ENCODE measurements at regions of chr9 and their contacts with region 1.

Region 1: DNA sequence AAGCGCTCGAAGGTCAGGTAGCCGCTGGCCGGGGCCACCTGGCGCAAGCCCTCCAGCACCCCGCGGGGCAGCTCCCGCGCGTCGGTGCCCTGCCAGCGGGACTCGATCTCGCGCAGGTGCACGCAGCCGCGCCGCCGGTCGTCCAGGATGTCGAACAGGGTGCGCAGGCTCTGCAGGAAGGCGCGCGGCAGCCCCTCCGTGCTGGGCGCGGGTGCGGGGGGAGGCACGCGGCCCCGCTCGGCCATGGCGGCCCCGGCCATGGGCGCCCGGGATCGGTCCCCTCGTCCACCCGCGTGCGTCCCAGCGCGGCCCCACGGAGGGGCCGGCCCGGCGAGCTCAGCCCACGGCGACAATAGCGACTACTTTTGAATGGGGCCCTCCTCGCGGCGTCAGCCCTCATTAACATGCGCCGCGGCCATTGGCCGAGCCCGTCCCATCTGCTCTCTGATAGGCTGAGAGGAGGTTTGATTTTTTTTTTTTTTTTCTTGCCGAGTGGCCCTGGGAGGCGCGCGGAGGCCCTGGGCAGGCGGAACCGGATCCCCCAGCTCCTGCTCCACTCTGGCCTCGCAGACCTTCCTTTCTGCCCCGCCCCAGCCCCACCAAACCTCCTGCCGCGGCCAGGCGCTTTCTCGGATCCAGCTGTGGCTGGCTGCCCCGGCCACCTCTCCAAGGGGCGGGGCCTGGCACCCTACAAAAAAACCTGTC is at the start of gene SAPCD2:
- DNase-seq: peak; percentile 80
- ATAC-seq: peak; percentile 83
- H3K4me3 Mint-ChIP-seq: peak within 1 kb of the TSS; percentile 72
- H3K27ac Mint-ChIP-seq: peak within 1 kb of the TSS; percentile 41
- H3K4me1 Mint-ChIP-seq: peaks cover 24% of the 10 kb centered on the region
- H3K27me3 Mint-ChIP-seq: peaks cover 4% of the 10 kb centered on the region
- CTCF ChIP-seq: no peak
- total RNA-seq, gene SAPCD2: 0.80 and 0.81 TPM in 2 replicates

Region 2: GRCh38 chr9:136363606-136364370 is 706.6 kb before region 1 on chr9 and contains the start of gene DNLZ:
- CTCF ChIA-PET with region 1: no interaction called
- POLR2A ChIA-PET with region 1: no interaction called
- intact Hi-C with region 1: no loop called
- DNase-seq: peak; percentile 90
- ATAC-seq: peak; percentile 69
- H3K4me3 Mint-ChIP-seq: peak within 1 kb of the TSS; percentile 86
- H3K27ac Mint-ChIP-seq: peak within 1 kb of the TSS; percentile 87
- H3K4me1 Mint-ChIP-seq: peaks cover 9% of the 10 kb centered on the region
- H3K27me3 Mint-ChIP-seq: no peaks in the 10 kb centered on the region
- CTCF ChIP-seq: peak; percentile 84
- total RNA-seq, gene DNLZ: 27.1 and 28.9 TPM in 2 replicates

Region 3: GRCh38 chr9:136521537-136521936 is 548.8 kb before region 1 on chr9:
- CTCF ChIA-PET with region 1: no interaction called
- POLR2A ChIA-PET with region 1: no interaction called
- intact Hi-C with region 1: no loop called
- DNase-seq: no peak
- ATAC-seq: peak; percentile 25
- H3K4me3 Mint-ChIP-seq: no peak overlapping the region
- H3K27ac Mint-ChIP-seq: no peak overlapping the region
- H3K4me1 Mint-ChIP-seq: peaks cover 7% of the 10 kb centered on the region
- H3K27me3 Mint-ChIP-seq: no peaks in the 10 kb centered on the region
- CTCF ChIP-seq: no peak

Region 4: DNA sequence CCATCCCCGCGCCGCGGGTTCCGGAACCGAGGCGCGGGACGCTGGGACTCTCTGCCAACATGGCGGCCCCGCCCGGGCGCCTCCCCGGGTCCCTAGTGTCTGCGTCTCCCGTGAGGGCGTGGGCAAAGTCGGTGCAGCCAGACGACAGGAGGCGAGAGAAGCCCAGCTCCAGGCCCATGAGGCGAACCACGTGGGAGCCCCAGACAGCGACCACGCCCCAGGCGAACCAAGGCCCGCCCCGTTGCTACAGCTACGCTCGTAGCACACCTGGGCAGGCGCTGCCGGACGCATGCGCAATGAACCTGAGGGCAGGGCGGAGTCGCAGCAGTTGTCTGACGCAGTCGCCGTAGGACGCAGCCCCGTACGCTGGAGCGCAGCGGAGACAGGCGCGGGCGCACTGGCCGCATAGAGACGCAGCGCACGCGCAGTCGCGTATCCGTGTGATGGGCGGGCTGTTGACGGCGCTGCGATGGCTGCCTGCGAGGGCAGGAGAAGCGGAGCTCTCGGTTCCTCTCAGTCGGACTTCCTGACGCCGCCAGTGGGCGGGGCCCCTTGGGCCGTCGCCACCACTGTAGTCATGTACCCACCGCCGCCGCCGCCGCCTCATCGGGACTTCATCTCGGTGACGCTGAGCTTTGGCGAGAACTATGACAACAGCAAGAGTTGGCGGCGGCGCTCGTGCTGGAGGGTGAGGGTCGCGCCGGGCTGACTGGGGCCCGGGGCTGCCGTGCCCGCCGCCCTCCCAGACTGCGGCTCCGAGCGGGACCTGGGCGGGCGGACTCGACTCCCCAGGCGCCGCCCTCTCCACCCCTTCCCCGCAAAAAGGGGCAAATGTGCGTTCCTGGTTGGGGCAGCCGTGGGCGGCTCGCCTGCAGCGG is 16.4 kb after region 1 on chr9 and contains the start of gene MAN1B1:
- CTCF ChIA-PET with region 1: interaction called, 8 read pairs
- POLR2A ChIA-PET with region 1: interaction called, 40 read pairs
- intact Hi-C with region 1: loop called (anchors 1 kb)
- DNase-seq: peak; percentile 98
- ATAC-seq: peak; percentile 77
- H3K4me3 Mint-ChIP-seq: peak within 1 kb of the TSS; percentile 93
- H3K27ac Mint-ChIP-seq: peak within 1 kb of the TSS; percentile 97
- H3K4me1 Mint-ChIP-seq: peaks cover 49% of the 10 kb centered on the region
- H3K27me3 Mint-ChIP-seq: no peaks in the 10 kb centered on the region
- CTCF ChIP-seq: no peak
- total RNA-seq, gene MAN1B1: 33.6 and 37.7 TPM in 2 replicates

Region 5: GRCh38 chr9:137103206-137103999 is 33.0 kb after region 1 on chr9:
- CTCF ChIA-PET with region 1: no interaction called
- POLR2A ChIA-PET with region 1: no interaction called
- intact Hi-C with region 1: no loop called
- DNase-seq: no peak
- ATAC-seq: no peak
- H3K4me3 Mint-ChIP-seq: no peak overlapping the region
- H3K27ac Mint-ChIP-seq: no peak overlapping the region
- H3K4me1 Mint-ChIP-seq: no peaks in the 10 kb centered on the region
- H3K27me3 Mint-ChIP-seq: no peaks in the 10 kb centered on the region
- CTCF ChIP-seq: no peak

Region 6: GRCh38 chr9:137354845-137355760 is 284.8 kb after region 1 on chr9:
- CTCF ChIA-PET with region 1: no interaction called
- POLR2A ChIA-PET with region 1: no interaction called
- intact Hi-C with region 1: no loop called
- DNase-seq: no peak
- ATAC-seq: no peak
- H3K4me3 Mint-ChIP-seq: no peak overlapping the region
- H3K27ac Mint-ChIP-seq: no peak overlapping the region
- H3K4me1 Mint-ChIP-seq: no peaks in the 10 kb centered on the region
- H3K27me3 Mint-ChIP-seq: no peaks in the 10 kb centered on the region
- CTCF ChIP-seq: no peak

Measured in activated B cell treated with CpG ODN at 0.5 μM for 24 hours (primary cell).